ENCODE measurements at regions of chr21 and their contacts with region 1.

Region 1: GRCh38 chr21:33199516-33200217 is 30.1 kb upstream of the IFNAR2 start:
- DNase-seq: peak; percentile 81
- H3K4me3 ChIP-seq: no peak overlapping the region
- H3K4me3 Mint-ChIP-seq: no peak overlapping the region
- H3K27ac Mint-ChIP-seq: no peak overlapping the region
- H3K4me1 ChIP-seq: peaks cover 23% of the 10 kb centered on the region
- H3K4me1 Mint-ChIP-seq: peaks cover 22% of the 10 kb centered on the region
- H3K27me3 ChIP-seq: no peaks in the 10 kb centered on the region
- H3K27me3 Mint-ChIP-seq: no peaks in the 10 kb centered on the region
- CTCF ChIP-seq: peak; percentile 65 to 82

Region 2: GRCh38 chr21:32994305-32994704 is 205.4 kb before region 1 on chr21:
- CTCF ChIA-PET with region 1: interaction called, 25 read pairs
- POLR2A ChIA-PET with region 1: no interaction called
- intact Hi-C with region 1: no loop called
- DNase-seq: peak in 1 of 2 experiments; percentile 23
- H3K4me3 ChIP-seq: no peak overlapping the region
- H3K4me3 Mint-ChIP-seq: no peak overlapping the region
- H3K27ac Mint-ChIP-seq: no peak overlapping the region
- H3K4me1 ChIP-seq: no peaks in the 10 kb centered on the region
- H3K4me1 Mint-ChIP-seq: no peaks in the 10 kb centered on the region
- H3K27me3 ChIP-seq: peaks cover 2% of the 10 kb centered on the region; the same call in 1 of the 2 replicates
- H3K27me3 Mint-ChIP-seq: peaks cover 24% of the 10 kb centered on the region
- CTCF ChIP-seq: peak; percentile 45 to 55

Region 3: DNA sequence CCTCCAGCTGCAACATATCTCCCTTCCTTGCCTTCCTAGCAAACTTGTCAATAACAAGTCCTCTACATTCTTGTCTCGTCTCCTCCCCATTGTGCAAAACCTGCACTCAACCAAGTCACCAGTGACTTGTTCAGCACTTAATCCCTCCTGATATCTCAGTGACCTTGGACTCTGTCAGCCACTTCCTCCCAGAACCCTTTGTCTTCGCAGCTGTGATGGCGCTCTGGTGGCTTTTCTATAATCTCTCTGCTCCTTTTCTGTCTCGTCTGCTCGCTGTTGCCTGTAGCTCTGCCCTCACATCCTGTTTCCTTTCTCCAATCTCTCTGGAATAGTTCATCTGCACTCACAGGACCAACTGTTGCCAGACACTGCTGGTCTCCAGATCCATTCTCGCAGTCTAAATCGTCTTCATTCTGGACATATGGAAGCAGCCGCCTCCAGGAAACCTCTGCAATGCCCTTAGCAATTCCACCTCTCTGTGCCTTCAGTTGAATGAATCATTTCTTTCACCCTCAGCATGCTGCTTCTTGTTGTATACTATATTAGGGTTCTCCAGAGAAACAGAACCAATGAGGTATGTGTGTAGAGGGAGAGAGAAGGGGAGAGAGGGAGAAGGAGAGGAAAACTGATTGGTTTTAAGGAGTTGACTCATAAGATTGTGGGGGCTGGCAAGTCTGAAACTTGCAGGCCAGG is 12.6 kb after region 1 on chr21:
- CTCF ChIA-PET with region 1: no interaction called
- POLR2A ChIA-PET with region 1: no interaction called
- intact Hi-C with region 1: no loop called
- DNase-seq: no peak
- H3K4me3 ChIP-seq: no peak overlapping the region
- H3K4me3 Mint-ChIP-seq: no peak overlapping the region
- H3K27ac Mint-ChIP-seq: no peak overlapping the region
- H3K4me1 ChIP-seq: peaks cover 5% of the 10 kb centered on the region; the same call in 1 of the 2 replicates
- H3K4me1 Mint-ChIP-seq: peaks cover 9% of the 10 kb centered on the region
- H3K27me3 ChIP-seq: no peaks in the 10 kb centered on the region
- H3K27me3 Mint-ChIP-seq: no peaks in the 10 kb centered on the region
- CTCF ChIP-seq: no peak

Region 4: GRCh38 chr21:33229784-33230544 is 30.3 kb after region 1 on chr21 and contains the start of gene IFNAR2:
- CTCF ChIA-PET with region 1: interaction called, 3 read pairs
- POLR2A ChIA-PET with region 1: interaction called, 3 read pairs
- intact Hi-C with region 1: loop called (anchors 1 kb)
- DNase-seq: peak; percentile 84
- H3K4me3 ChIP-seq: peak within 1 kb of the TSS; percentile 93
- H3K4me3 Mint-ChIP-seq: peak within 1 kb of the TSS; percentile 87
- H3K27ac Mint-ChIP-seq: peak within 1 kb of the TSS; percentile 64
- H3K4me1 ChIP-seq: peaks cover 62% of the 10 kb centered on the region
- H3K4me1 Mint-ChIP-seq: peaks cover 55% of the 10 kb centered on the region
- H3K27me3 ChIP-seq: no peaks in the 10 kb centered on the region
- H3K27me3 Mint-ChIP-seq: no peaks in the 10 kb centered on the region
- CTCF ChIP-seq: no peak
- total RNA-seq, gene IFNAR2: 33.7 and 36.1 TPM in 2 replicates

Region 5: DNA sequence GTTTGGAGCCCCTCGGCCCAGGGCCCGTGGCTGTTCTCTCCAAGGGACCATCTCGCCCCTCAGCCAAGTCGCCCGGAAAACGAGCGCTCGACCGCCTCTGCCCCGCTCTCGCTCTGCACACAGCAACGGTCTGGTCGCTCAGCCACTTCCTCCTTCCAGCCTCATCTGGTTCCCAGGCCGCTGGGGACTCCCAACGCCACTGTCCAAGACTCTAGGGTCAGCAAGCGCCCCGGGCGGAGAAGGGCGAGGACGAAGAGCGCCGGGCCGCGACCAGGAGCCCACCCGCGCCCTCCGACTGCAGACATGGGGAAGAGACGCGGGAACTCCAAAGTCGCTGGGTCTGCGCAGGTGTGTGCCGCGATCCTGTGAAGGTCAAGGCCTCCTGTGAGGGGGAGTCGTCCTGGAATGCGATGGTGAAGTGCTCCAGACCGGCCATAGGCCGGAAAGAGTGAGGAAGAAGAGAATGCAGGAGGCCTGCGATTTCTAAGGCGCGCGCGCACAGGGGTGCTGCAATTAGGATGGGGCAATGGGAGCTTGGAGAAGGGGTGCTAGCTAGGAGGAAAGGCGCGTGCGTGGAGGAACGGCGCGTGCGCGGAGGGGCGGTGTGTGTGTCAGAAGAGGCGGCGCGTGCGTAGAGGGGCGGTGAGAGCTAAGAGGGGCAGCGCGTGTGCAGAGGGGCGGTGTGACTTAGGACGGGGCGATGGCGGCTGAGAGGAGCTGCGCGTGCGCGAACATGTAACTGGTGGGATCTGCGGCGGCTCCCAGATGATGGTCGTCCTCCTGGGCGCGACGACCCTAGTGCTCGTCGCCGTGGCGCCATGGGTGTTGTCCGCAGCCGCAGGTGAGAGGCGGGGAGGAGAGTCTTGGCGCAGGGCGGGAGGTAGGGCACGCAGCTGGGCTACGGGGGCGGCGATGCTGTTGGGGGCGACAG is 124.9 kb after region 1 on chr21 and contains the start of gene IFNAR1:
- CTCF ChIA-PET with region 1: interaction called, 16 read pairs
- POLR2A ChIA-PET with region 1: no interaction called
- intact Hi-C with region 1: loop called (anchors 2 kb)
- DNase-seq: peak; percentile 94 to 96
- H3K4me3 ChIP-seq: peak within 1 kb of the TSS; percentile 70
- H3K4me3 Mint-ChIP-seq: no peak within 1 kb of the TSS
- H3K27ac Mint-ChIP-seq: no peak within 1 kb of the TSS
- H3K4me1 ChIP-seq: no peaks in the 10 kb centered on the region
- H3K4me1 Mint-ChIP-seq: no peaks in the 10 kb centered on the region
- H3K27me3 ChIP-seq: no peaks in the 10 kb centered on the region
- H3K27me3 Mint-ChIP-seq: peaks cover 2% of the 10 kb centered on the region
- CTCF ChIP-seq: no peak
- total RNA-seq, gene IFNAR1: 19.7 and 20.4 TPM in 2 replicates

Region 6: DNA sequence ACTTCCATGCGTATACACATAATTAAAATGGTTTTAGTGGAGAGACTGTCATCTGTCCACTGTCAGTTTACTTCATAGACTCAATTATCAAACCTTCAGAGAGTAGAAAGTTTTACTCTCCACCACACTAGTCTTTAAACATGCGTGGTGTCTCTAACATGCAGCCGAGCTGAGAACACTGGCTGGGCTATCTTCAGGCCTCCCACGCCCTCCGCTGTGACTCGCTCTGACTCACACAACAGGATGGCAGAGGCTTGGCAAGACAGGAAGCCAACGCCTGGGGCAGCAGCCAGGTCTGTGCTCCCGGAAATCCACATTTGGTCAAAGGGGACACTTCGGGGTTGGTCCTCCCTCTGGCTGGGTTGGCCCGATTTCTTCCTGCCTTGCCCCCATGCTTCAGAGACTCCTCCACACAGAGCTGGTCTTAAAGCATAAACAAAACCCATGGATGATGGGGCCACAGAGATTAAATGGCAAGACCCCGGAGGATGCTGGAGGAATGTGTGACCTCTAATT is 180.9 kb after region 1 on chr21:
- CTCF ChIA-PET with region 1: no interaction called
- POLR2A ChIA-PET with region 1: no interaction called
- intact Hi-C with region 1: no loop called
- DNase-seq: peak; percentile 31 to 76
- H3K4me3 ChIP-seq: no peak overlapping the region
- H3K4me3 Mint-ChIP-seq: no peak overlapping the region
- H3K27ac Mint-ChIP-seq: no peak overlapping the region
- H3K4me1 ChIP-seq: peaks cover 29% of the 10 kb centered on the region
- H3K4me1 Mint-ChIP-seq: no peaks in the 10 kb centered on the region
- H3K27me3 ChIP-seq: no peaks in the 10 kb centered on the region
- H3K27me3 Mint-ChIP-seq: no peaks in the 10 kb centered on the region
- CTCF ChIP-seq: no peak

Region 7: GRCh38 chr21:33441489-33442477 is 242.1 kb after region 1 on chr21:
- CTCF ChIA-PET with region 1: interaction called, 18 read pairs
- POLR2A ChIA-PET with region 1: no interaction called
- intact Hi-C with region 1: loop called (anchors 1 kb)
- DNase-seq: no peak
- H3K4me3 ChIP-seq: no peak overlapping the region
- H3K4me3 Mint-ChIP-seq: no peak overlapping the region
- H3K27ac Mint-ChIP-seq: no peak overlapping the region
- H3K4me1 ChIP-seq: no peaks in the 10 kb centered on the region
- H3K4me1 Mint-ChIP-seq: peaks cover 6% of the 10 kb centered on the region
- H3K27me3 ChIP-seq: no peaks in the 10 kb centered on the region
- H3K27me3 Mint-ChIP-seq: no peaks in the 10 kb centered on the region
- CTCF ChIP-seq: no peak

Measured in Caco-2 (cell line).